Activated CD8-positive, alpha-beta memory T cell treated with anti-CD3 and anti-CD28 coated beads, Interleukin-2, amount 10 ng/mL, durations not matched to agents 7 days and 5 days (primary cell): ENCODE measurements at regions of chr2 and their contacts with region 1.

Region 1: GRCh38 chr2:161954103-161954502 is 119.9 kb downstream of the DPP4 start:
- DNase-seq: no peak
- ATAC-seq: no peak
- H3K4me3 Mint-ChIP-seq: no peak overlapping the region
- H3K27ac Mint-ChIP-seq: peak overlapping the region; percentile 92
- H3K4me1 Mint-ChIP-seq: peaks cover 75% of the 10 kb centered on the region
- H3K27me3 Mint-ChIP-seq: no peaks in the 10 kb centered on the region

Region 2: GRCh38 chr2:161867336-161867735 is 86.8 kb before region 1 on chr2:
- CTCF ChIA-PET with region 1: no interaction called
- DNase-seq: no peak
- ATAC-seq: no peak
- H3K4me3 Mint-ChIP-seq: no peak overlapping the region
- H3K27ac Mint-ChIP-seq: no peak overlapping the region
- H3K4me1 Mint-ChIP-seq: peaks cover 3% of the 10 kb centered on the region
- H3K27me3 Mint-ChIP-seq: no peaks in the 10 kb centered on the region

Region 3: DNA sequence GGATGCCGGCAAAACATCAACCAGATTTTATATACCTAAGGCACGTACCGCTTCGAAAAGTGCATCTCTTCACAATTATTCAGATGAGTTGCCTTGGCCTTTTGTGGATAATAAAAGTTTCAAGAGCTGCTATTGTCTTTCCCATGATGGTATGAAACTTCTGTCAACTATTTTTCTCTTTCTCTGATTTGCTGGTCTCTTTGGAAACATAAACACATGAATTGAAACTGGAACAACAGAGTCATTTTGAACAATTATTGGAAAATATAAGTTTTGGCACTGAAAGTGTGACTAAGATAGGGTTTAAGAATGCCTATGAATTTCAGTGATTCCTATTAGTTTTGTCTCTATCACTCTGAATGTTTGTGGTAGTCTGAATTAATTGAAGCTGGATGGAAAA is 10.1 kb after region 1 on chr2:
- CTCF ChIA-PET with region 1: interaction called, 10 read pairs
- DNase-seq: no peak
- ATAC-seq: peak; percentile 34
- H3K4me3 Mint-ChIP-seq: peak overlapping the region; percentile 11
- H3K27ac Mint-ChIP-seq: peak overlapping the region; percentile 67
- H3K4me1 Mint-ChIP-seq: peaks cover 46% of the 10 kb centered on the region
- H3K27me3 Mint-ChIP-seq: no peaks in the 10 kb centered on the region

Region 4: DNA sequence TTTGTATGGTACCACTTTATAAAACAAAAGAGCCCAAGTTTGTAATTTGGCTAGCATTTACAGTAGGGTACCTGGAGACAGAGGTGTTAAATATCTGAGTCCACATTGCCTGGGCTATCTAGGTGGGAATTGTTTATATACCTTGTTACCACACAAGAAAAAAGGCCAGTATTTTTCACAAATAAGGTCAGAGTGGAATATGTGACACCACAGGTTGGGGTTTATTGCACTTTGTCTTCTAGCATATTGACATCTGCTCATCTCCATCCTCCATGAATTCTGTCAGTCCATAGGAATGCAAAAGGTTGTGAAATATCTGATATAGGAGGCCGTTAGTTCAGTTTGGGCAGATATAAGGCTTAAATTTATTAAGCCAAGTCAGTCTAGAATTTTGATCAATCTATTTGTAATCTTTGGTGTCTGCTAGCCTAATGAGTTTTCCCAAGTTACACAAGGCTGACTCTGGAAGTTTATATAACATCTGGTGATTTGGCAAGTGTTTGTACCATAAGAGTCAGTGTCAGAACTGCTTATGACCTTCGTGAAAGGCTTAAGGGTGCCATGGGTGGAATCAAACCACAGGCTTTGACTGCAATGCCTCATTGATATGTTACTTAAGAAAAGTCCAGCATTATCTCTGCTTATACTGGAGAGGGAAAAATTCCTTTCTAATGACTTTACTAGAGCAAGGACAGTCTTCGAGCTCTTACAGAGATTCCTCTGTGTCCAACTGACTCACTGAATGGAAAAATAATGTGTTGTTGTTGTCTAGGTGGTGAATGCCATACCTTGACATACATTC is 131.2 kb after region 1 on chr2:
- CTCF ChIA-PET with region 1: no interaction called
- DNase-seq: no peak
- ATAC-seq: no peak
- H3K4me3 Mint-ChIP-seq: no peak overlapping the region
- H3K27ac Mint-ChIP-seq: no peak overlapping the region
- H3K4me1 Mint-ChIP-seq: no peaks in the 10 kb centered on the region
- H3K27me3 Mint-ChIP-seq: peaks cover 5% of the 10 kb centered on the region